ENCODE measurements at regions of chr12 and their contacts with region 1.

Region 1: DNA sequence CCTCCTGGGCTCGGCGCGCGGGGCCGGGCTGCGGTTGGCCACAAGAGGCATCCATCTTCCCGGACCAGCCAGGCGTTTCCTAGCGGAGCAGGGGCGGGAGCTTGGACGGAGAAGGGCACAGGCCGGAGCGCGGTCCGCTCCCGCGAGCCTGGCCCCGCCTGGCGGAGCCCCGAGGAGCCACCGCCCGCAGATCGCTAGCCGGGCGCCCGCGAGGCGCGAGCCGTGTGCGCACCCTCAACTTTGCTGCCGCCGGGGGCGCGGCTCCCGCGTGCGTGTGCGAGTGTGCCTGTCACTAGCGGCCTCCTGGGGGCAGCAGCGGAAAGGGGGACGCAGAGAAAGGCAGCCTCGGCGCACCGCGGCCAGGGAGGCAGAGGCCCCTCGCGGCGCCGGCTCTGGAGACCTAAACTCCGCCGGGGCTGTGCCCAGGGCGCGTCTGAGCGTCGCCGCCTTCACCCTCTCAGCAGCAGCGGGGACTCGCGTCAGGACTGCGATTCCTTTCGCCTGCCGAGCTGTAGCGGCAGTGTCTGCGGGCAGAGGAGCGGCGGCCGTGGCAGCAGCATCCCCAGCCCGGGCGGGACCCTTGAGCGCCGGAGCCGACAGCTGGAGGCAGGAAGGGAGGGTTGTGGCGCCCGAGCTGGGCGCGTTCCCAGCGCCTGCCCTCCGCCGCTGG is 644 bp upstream of the SRGAP1 start:
- DNase-seq: peak; percentile 92 to 93
- ATAC-seq: peak; percentile 91 to 98 (median 94)
- H3K4me3 ChIP-seq: peak overlapping the region; percentile 68 to 98 (median 90)
- H3K27ac ChIP-seq: peak overlapping the region; percentile 80 to 95 (median 92)
- H3K4me1 ChIP-seq: peaks cover 0 to 44% (median 13%) of the 10 kb centered on the region in 9 donors
- H3K27me3 ChIP-seq: no peaks in the 10 kb centered on the region
- CTCF ChIP-seq: peak; percentile 87 to 98 (median 94)

Region 2: DNA sequence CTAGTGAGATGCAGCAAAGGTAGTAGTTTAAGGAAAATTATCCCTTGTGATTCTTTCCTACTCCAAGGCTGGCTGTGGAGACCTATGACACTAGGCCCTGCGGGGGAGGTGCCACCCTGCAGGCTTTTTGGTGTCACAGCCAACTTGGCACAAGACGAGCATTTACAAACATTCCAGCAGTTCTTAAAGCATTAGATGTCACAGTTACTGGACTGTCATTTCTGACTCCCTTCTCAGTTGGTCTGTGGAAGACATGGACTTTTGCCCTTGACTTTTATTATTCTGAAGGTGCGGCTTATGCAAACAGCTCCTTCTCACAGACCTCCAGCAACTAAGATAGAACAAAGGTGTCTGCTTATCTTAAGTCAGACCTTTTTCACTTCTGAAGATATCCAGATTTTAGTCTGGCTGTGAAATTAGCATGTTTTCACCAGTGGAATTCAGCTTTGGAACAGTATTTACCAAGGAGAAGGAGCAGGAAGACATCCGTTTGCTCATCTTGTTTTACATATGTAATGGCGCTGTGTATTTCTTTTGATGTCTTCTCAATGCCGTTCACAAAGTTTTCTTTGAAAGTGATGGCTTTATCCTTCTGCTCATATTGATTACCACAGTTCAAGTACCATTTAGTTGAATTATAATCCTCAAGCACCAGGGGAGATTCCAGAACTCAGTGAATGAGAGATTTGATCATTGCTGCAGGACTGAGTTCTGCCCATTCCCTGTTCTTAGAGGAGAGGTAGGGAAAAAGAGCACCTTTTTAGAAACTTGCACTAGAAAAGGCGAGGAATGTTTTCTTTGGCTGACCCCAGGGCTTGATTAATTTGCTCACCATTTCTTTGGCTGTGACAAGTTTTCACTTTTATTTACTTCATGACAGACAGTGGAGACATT is 18.6 kb after region 1 on chr12:
- intact Hi-C with region 1: no loop called
- DNase-seq: peak in 1 of 2 donors; percentile 41
- ATAC-seq: peak; percentile 29 to 93 (median 77)
- H3K4me3 ChIP-seq: no peak overlapping the region
- H3K27ac ChIP-seq: peak overlapping the region in 7 of 10 donors; percentile 17 to 61 (median 42)
- H3K4me1 ChIP-seq: peaks cover 0 to 18% (median 8%) of the 10 kb centered on the region in 9 donors
- H3K27me3 ChIP-seq: no peaks in the 10 kb centered on the region
- CTCF ChIP-seq: no peak

Region 3: GRCh38 chr12:63940310-63941005 is 96.6 kb after region 1 on chr12:
- intact Hi-C with region 1: loop called in 1 of 10 experiments (anchors 10 kb)
- DNase-seq: peak in 1 of 2 donors; percentile 26
- ATAC-seq: peak in 7 of 8 donors; percentile 26 to 83 (median 68)
- H3K4me3 ChIP-seq: no peak overlapping the region
- H3K27ac ChIP-seq: peak overlapping the region in 8 of 10 donors; percentile 14 to 75 (median 25)
- H3K4me1 ChIP-seq: peaks cover 2 to 68% (median 38%) of the 10 kb centered on the region in 9 donors
- H3K27me3 ChIP-seq: no peaks in the 10 kb centered on the region
- CTCF ChIP-seq: no peak

Region 4: GRCh38 chr12:64009321-64010068 is 165.6 kb after region 1 on chr12:
- intact Hi-C with region 1: loop called in 2 of 10 experiments (anchors 10 kb)
- DNase-seq: no peak
- ATAC-seq: no peak
- H3K4me3 ChIP-seq: no peak overlapping the region
- H3K27ac ChIP-seq: no peak overlapping the region
- H3K4me1 ChIP-seq: peaks cover 0 to 14% (median 8%) of the 10 kb centered on the region in 9 donors
- H3K27me3 ChIP-seq: no peaks in the 10 kb centered on the region
- CTCF ChIP-seq: no peak

Region 5: DNA sequence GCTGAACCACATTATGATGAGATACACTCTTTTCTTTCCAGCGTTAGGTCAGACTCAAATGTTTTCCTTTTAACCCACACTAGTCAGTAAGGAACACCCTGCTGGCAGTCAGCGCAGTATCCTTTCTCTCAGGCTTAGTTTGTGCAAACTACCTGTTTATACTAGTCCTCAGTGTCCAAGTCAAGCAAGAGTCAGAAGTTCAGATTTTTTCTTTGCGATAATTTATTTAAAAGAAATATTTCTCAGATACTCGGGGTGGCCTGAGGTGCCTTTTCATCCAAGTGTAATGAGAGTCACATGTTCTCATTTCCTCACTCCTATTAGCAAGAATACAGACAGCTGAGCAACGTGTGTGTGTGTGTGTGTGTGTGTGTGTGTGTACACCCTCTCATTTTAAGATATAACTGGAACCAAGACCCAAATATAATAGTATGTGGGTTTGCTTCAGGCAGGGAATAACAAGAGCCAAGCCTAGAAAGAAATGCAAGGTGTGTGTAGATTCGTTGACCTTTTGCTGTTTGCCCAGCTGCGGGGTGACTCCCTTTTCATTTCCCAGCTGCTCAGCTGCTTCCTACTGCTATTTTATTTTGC is 195.5 kb after region 1 on chr12:
- intact Hi-C with region 1: no loop called
- DNase-seq: peak in 1 of 2 donors; percentile 11
- ATAC-seq: peak in 7 of 8 donors; percentile 61 to 82 (median 76)
- H3K4me3 ChIP-seq: peak overlapping the region in 5 of 10 donors; percentile 24 to 31 (median 27)
- H3K27ac ChIP-seq: peak overlapping the region in 3 of 10 donors; percentile 0 to 53 (median 51)
- H3K4me1 ChIP-seq: peaks cover 0 to 23% (median 11%) of the 10 kb centered on the region in 9 donors
- H3K27me3 ChIP-seq: no peaks in the 10 kb centered on the region
- CTCF ChIP-seq: no peak

Region 6: GRCh38 chr12:64099397-64099796 is 255.5 kb after region 1 on chr12:
- intact Hi-C with region 1: loop called in 1 of 10 experiments (anchors 10 kb)
- DNase-seq: peak in 1 of 2 donors; percentile 34
- ATAC-seq: peak; percentile 59 to 89 (median 84)
- H3K4me3 ChIP-seq: no peak overlapping the region
- H3K27ac ChIP-seq: peak overlapping the region in 4 of 10 donors; percentile 9 to 65 (median 32)
- H3K4me1 ChIP-seq: peaks cover 0 to 45% (median 15%) of the 10 kb centered on the region in 9 donors
- H3K27me3 ChIP-seq: no peaks in the 10 kb centered on the region
- CTCF ChIP-seq: no peak

Region 7: DNA sequence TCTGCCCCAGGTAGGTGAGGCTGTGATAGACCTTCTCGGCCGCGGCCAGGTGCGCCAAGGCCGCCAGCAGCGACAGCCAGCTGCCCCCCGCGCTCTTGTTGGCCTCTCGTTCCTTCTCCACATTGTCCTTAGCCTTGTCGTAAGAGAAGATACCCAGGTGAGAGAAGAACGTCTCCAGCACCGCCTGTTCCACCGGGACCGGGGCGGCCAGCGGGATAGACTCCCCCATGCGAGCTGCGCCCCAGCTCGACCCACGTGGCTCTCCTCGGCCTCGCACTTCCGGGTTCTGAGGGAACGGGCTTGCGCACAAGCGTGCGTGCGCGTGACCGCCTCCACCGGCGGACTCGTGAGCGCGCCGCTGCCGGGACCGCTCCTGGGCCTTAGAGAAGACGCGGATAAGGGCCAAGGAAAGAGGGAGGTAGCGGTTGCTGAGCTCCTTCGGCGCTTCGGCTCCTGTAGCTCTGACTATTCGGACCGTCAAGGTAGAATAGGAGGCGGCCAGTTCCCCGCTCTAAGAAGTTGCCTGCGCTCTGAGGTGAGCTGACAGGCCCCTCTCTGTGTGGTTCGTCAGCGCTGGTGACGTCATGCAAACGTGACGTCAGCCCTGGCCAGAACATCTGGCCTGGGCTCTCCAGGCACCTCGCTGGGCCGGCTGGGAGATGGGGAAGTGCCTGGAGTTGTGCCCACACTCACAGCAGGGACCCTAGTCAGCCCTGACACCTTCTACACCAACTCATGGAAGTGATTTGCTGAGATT is 378.3 kb after region 1 on chr12 and contains the start of gene KICS2:
- intact Hi-C with region 1: loop called in 1 of 10 experiments (anchors 1 kb)
- DNase-seq: peak; percentile 92 to 93
- ATAC-seq: peak; percentile 98 to 100 (median 99)
- H3K4me3 ChIP-seq: peak within 1 kb of the TSS; percentile 60 to 94 (median 88)
- H3K27ac ChIP-seq: peak within 1 kb of the TSS; percentile 44 to 95 (median 90)
- H3K4me1 ChIP-seq: peaks cover 0 to 26% (median 11%) of the 10 kb centered on the region in 9 donors
- H3K27me3 ChIP-seq: no peaks in the 10 kb centered on the region
- CTCF ChIP-seq: peak in 3 of 9 donors; percentile 6 to 7 (median 6)
- total RNA-seq, gene KICS2: 3.2 to 6.1 (median 4.2) TPM

Region 8: GRCh38 chr12:64403707-64404469 is 560.0 kb after region 1 on chr12 and contains the start of gene XPOT:
- intact Hi-C with region 1: loop called in 2 of 10 experiments (anchors 10 kb)
- DNase-seq: peak; percentile 93 to 95
- ATAC-seq: peak; percentile 96 to 99 (median 98)
- H3K4me3 ChIP-seq: peak within 1 kb of the TSS; percentile 68 to 100 (median 96)
- H3K27ac ChIP-seq: peak within 1 kb of the TSS; percentile 84 to 99 (median 97)
- H3K4me1 ChIP-seq: peaks cover 0 to 22% (median 9%) of the 10 kb centered on the region in 9 donors
- H3K27me3 ChIP-seq: no peaks in the 10 kb centered on the region
- CTCF ChIP-seq: peak in 1 of 9 donors; percentile 22
- total RNA-seq, gene XPOT: 15.2 to 31.6 (median 20.1) TPM